B cell (primary cell): ENCODE measurements at regions of chr18 and their contacts with region 1.

Region 1: GRCh38 chr18:9913526-9914333 is at the start of gene VAPA:
- DNase-seq: peak; percentile 99
- ATAC-seq: peak; percentile 80
- H3K4me3 ChIP-seq: peak within 1 kb of the TSS; percentile 78 to 90 (median 89)
- H3K4me3 Mint-ChIP-seq: peak within 1 kb of the TSS; percentile 94
- H3K27ac ChIP-seq: peak within 1 kb of the TSS; percentile 89 to 95
- H3K27ac Mint-ChIP-seq: peak within 1 kb of the TSS; percentile 96
- H3K4me1 ChIP-seq: peaks cover 30 to 35% of the 10 kb centered on the region in 2 donors
- H3K4me1 Mint-ChIP-seq: peaks cover 26% of the 10 kb centered on the region
- H3K27me3 ChIP-seq: peaks cover 0 to 4% (median 2%) of the 10 kb centered on the region in 4 experiments
- H3K27me3 Mint-ChIP-seq: peaks cover 9% of the 10 kb centered on the region
- CTCF ChIP-seq: no peak
- total RNA-seq, gene VAPA: 109 and 117 TPM in 2 replicates

Region 2: DNA sequence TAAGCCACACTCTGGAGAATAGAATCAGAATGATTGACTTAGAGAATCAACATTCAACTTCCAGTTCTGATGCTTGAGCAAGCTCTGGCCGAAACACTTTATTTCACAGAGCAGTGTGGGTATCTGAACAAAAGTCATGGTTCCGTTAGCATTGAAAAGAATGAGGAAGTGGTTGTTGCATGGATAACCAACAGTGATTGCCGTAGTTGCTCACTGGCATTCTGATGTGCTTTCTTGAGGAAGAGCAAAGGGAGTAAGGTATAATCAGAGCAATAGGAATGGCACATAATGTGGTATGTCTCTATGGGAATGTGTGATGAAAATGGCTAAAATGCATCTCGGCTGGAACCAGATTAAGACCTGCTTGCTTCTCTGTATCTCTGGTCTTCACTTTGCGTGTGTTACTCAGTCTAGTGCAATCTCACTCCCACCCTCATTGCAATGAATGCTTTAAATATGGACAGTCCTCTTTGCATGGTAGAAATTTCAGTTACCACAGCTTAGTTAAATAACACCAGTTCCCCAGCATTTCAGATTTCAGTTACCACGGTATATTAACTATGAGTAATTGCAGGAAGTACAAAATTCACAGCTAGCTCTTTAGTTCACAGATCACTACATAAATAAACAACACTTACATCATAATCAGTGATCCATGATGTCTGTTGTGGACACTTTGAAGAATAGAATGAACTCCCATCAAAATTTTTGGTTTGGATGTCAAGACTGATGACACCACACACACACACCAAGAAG is 1312.3 kb before region 1 on chr18:
- CTCF ChIA-PET with region 1: no interaction called
- POLR2A ChIA-PET with region 1: no interaction called
- intact Hi-C with region 1: loop called (anchors 5 kb)
- DNase-seq: peak; percentile 75
- ATAC-seq: peak; percentile 74
- H3K4me3 ChIP-seq: peak overlapping the region in 1 of 5 experiments; percentile 32
- H3K4me3 Mint-ChIP-seq: peak overlapping the region; percentile 85
- H3K27ac ChIP-seq: peak overlapping the region; percentile 47 to 66
- H3K27ac Mint-ChIP-seq: peak overlapping the region; percentile 97
- H3K4me1 ChIP-seq: peaks cover 41 to 44% of the 10 kb centered on the region in 2 donors
- H3K4me1 Mint-ChIP-seq: peaks cover 53% of the 10 kb centered on the region
- H3K27me3 ChIP-seq: no peaks in the 10 kb centered on the region
- H3K27me3 Mint-ChIP-seq: no peaks in the 10 kb centered on the region
- CTCF ChIP-seq: no peak

Region 3: DNA sequence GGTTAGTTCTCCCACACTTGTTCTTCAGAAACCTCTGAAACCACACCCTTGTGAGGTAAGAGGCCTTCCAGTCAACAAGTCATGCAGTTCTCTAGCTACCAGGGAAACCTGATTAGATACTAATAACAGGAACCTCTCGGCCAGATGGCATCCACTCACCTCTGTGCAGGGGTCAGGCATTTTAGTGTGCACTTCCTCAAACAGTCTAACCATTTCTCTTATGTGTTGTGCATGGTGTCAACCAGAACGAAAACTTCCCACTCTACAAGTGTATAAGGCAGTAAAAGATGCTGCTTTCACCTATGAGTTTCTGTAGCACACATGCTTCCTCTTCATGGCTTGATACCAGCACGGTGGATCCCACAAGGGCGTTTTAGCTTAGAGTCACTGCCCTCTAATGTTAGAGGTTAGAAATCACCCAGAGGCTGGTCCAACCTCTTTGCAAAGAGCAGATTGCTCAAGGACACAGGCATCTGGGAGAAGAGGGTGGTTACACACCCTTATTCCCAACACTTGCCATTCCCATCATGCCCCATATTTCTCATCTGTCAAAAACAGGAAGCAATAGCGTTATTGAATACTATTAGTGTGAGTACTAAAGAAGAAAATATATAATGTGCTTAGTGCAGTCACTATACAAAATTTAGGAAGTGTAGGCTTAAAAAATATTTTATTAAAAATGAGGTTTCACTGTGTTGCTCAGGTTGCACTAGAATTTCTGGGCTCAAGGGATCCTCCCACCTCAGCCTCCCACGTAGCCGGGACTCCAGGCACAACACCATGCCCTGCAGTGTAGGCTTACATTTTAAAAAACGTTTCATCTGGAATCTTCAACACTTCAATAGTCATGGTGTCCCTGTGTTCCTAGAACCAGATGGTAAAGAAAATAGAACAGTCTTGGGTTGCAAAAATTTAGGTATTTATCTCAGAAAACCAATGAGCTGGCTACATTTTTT is 240.2 kb before region 1 on chr18:
- CTCF ChIA-PET with region 1: interaction called, 3 read pairs
- POLR2A ChIA-PET with region 1: no interaction called
- intact Hi-C with region 1: loop called (anchors 1 kb)
- DNase-seq: peak; percentile 95
- ATAC-seq: peak; percentile 95
- H3K4me3 ChIP-seq: no peak overlapping the region
- H3K4me3 Mint-ChIP-seq: peak overlapping the region; percentile 40
- H3K27ac ChIP-seq: peak overlapping the region; percentile 65 to 78
- H3K27ac Mint-ChIP-seq: peak overlapping the region; percentile 90
- H3K4me1 ChIP-seq: peaks cover 12 to 15% of the 10 kb centered on the region in 2 donors
- H3K4me1 Mint-ChIP-seq: peaks cover 10% of the 10 kb centered on the region
- H3K27me3 ChIP-seq: no peaks in the 10 kb centered on the region
- H3K27me3 Mint-ChIP-seq: no peaks in the 10 kb centered on the region
- CTCF ChIP-seq: peak; percentile 65

Region 4: DNA sequence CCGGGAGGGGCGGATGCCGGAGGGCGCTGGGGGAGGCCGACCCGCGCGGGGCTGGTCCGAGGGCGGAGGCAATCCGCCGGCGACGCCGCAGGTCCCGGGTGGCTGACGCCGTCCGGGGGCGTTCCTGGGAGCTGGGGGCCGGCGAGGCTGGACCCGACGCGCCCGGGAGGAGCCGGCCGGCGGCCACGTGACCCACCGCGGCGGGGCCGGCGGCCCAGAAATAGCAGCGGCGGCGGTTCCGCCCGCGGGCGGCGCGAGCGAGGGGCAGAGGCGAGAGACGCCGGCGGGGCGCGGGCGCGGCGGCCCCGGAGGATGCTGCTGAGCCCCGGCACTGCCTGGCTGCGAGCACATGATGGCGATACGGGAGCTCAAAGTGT is 205.7 kb before region 1 on chr18 and contains the start of gene RAB31:
- CTCF ChIA-PET with region 1: no interaction called
- POLR2A ChIA-PET with region 1: interaction called, 3 read pairs
- intact Hi-C with region 1: loop called (anchors 1 kb)
- DNase-seq: peak; percentile 71
- ATAC-seq: peak; percentile 57
- H3K4me3 ChIP-seq: peak within 1 kb of the TSS; percentile 63 to 83 (median 72)
- H3K4me3 Mint-ChIP-seq: peak within 1 kb of the TSS; percentile 97
- H3K27ac ChIP-seq: peak within 1 kb of the TSS; percentile 76
- H3K27ac Mint-ChIP-seq: peak within 1 kb of the TSS; percentile 95
- H3K4me1 ChIP-seq: peaks cover 39 to 48% of the 10 kb centered on the region in 2 donors
- H3K4me1 Mint-ChIP-seq: peaks cover 49% of the 10 kb centered on the region
- H3K27me3 ChIP-seq: peaks cover 0 to 22% (median 0%) of the 10 kb centered on the region in 4 experiments
- H3K27me3 Mint-ChIP-seq: no peaks in the 10 kb centered on the region
- CTCF ChIP-seq: no peak
- total RNA-seq, gene RAB31: 38.5 and 44.6 TPM in 2 replicates

Region 5: GRCh38 chr18:9951022-9951859 is 37.5 kb after region 1 on chr18:
- CTCF ChIA-PET with region 1: interaction called, 4 read pairs
- POLR2A ChIA-PET with region 1: no interaction called
- intact Hi-C with region 1: loop called (anchors 5 kb)
- DNase-seq: peak; percentile 34
- ATAC-seq: no peak
- H3K4me3 ChIP-seq: no peak overlapping the region
- H3K4me3 Mint-ChIP-seq: no peak overlapping the region
- H3K27ac ChIP-seq: no peak overlapping the region
- H3K27ac Mint-ChIP-seq: no peak overlapping the region
- H3K4me1 ChIP-seq: no peaks in the 10 kb centered on the region
- H3K4me1 Mint-ChIP-seq: peaks cover 3% of the 10 kb centered on the region
- H3K27me3 ChIP-seq: no peaks in the 10 kb centered on the region
- H3K27me3 Mint-ChIP-seq: no peaks in the 10 kb centered on the region
- CTCF ChIP-seq: peak; percentile 61

Region 6: DNA sequence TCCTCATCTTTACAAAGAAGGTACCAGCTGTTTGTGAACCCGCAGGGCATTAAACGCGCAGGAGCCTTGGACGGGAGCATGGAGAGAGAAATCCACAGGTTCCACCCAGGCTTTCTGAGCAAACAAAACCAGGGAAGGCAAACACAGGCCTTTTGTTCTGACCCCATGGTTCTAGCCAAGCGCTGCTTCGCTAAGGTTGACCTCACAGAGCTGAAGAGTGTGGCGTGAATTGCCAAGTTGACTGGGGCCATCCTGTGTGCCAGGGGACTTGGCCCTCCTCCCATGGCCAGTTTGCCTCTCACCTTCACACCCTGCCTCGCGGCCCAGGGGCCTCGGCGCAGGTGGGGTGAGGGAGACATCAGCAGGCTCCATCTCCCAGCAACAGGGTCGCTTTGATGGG is 74.2 kb after region 1 on chr18:
- CTCF ChIA-PET with region 1: no interaction called
- POLR2A ChIA-PET with region 1: no interaction called
- intact Hi-C with region 1: no loop called
- DNase-seq: no peak
- ATAC-seq: no peak
- H3K4me3 ChIP-seq: no peak overlapping the region
- H3K4me3 Mint-ChIP-seq: no peak overlapping the region
- H3K27ac ChIP-seq: no peak overlapping the region
- H3K27ac Mint-ChIP-seq: no peak overlapping the region
- H3K4me1 ChIP-seq: no peaks in the 10 kb centered on the region
- H3K4me1 Mint-ChIP-seq: no peaks in the 10 kb centered on the region
- H3K27me3 ChIP-seq: peaks cover 0 to 6% (median 0%) of the 10 kb centered on the region in 4 experiments
- H3K27me3 Mint-ChIP-seq: peaks cover 25% of the 10 kb centered on the region
- CTCF ChIP-seq: no peak

Region 7: DNA sequence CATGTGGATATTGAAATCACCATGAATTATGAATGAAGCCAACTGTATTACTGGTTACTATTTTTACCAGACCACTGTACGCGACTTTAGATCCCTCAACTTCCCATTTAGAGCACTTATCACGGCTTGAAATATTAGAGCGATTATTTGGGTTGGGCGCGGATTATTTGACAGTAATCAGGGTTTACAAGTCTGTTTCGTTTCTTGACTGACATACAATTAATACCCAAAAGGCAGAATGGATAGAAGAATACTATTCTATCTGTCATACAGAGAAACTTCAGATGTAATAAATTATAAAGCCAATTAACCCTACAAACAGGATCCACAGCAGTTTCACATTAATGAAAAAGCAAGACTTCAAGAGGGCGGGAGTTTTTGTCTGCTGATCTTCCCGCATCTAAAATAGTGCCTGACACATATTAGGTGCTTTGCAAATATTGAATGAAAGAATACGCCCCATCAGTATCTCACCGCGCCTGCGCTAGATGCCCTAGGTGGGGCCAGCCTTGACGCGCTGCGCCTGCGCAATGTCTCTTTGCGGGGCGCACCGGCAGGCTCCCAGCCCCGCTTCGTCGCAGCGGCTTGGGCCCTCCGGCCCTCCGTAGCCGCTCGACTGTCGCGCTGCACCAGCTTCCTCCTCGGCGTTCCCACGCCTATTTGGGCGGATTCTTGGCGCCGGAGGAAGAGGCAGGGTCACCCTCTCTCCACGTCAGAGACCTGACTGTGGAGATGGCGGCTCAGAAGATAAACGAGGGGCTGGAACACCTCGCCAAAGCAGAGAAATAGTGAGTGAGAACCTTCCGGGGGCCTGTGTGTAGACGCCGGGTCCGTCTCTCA is 611.9 kb after region 1 on chr18 and contains the start of gene NAPG:
- CTCF ChIA-PET with region 1: no interaction called
- POLR2A ChIA-PET with region 1: interaction called, 6 read pairs
- intact Hi-C with region 1: loop called (anchors 1 kb)
- DNase-seq: peak; percentile 96
- ATAC-seq: peak; percentile 90
- H3K4me3 ChIP-seq: peak within 1 kb of the TSS; percentile 79 to 94 (median 88)
- H3K4me3 Mint-ChIP-seq: peak within 1 kb of the TSS; percentile 99
- H3K27ac ChIP-seq: peak within 1 kb of the TSS; percentile 77 to 80
- H3K27ac Mint-ChIP-seq: peak within 1 kb of the TSS; percentile 96
- H3K4me1 ChIP-seq: peaks cover 20 to 39% of the 10 kb centered on the region in 2 donors
- H3K4me1 Mint-ChIP-seq: peaks cover 51% of the 10 kb centered on the region
- H3K27me3 ChIP-seq: no peaks in the 10 kb centered on the region
- H3K27me3 Mint-ChIP-seq: no peaks in the 10 kb centered on the region
- CTCF ChIP-seq: no peak
- total RNA-seq, gene NAPG: 31.8 and 38.7 TPM in 2 replicates

Region 8: GRCh38 chr18:11851146-11851805 is 1937.5 kb after region 1 on chr18 and contains the start of gene CHMP1B:
- CTCF ChIA-PET with region 1: no interaction called
- POLR2A ChIA-PET with region 1: no interaction called
- intact Hi-C with region 1: loop called (anchors 2 kb)
- DNase-seq: peak; percentile 98
- ATAC-seq: peak; percentile 94
- H3K4me3 ChIP-seq: peak within 1 kb of the TSS; percentile 85 to 100 (median 98)
- H3K4me3 Mint-ChIP-seq: peak within 1 kb of the TSS; percentile 100
- H3K27ac ChIP-seq: peak within 1 kb of the TSS; percentile 93 to 97
- H3K27ac Mint-ChIP-seq: peak within 1 kb of the TSS; percentile 99
- H3K4me1 ChIP-seq: peaks cover 28 to 31% of the 10 kb centered on the region in 2 donors
- H3K4me1 Mint-ChIP-seq: peaks cover 34% of the 10 kb centered on the region
- H3K27me3 ChIP-seq: no peaks in the 10 kb centered on the region
- H3K27me3 Mint-ChIP-seq: no peaks in the 10 kb centered on the region
- CTCF ChIP-seq: no peak
- total RNA-seq, gene CHMP1B: 52.2 and 55.4 TPM in 2 replicates